Heart left ventricle (tissue), 16 donors: ENCODE measurements at regions of chr5 and their contacts with region 1.

Region 1: GRCh38 chr5:88502179-88503040 is 233.8 kb upstream of the TMEM161B start:
- DNase-seq: no peak
- ATAC-seq: no peak
- H3K4me3 ChIP-seq: peak overlapping the region; percentile 9 to 68 (median 52)
- H3K27ac ChIP-seq: peak overlapping the region in 5 of 12 donors; percentile 6 to 72 (median 58)
- H3K4me1 ChIP-seq: peaks cover 0 to 4% (median 0%) of the 10 kb centered on the region in 12 donors
- H3K27me3 ChIP-seq: no peaks in the 10 kb centered on the region
- CTCF ChIP-seq: no peak
- POLR2A ChIP-seq: no peak

Region 2: GRCh38 chr5:88583471-88583870 is 81.1 kb after region 1 on chr5:
- intact Hi-C with region 1: no loop called
- DNase-seq: no peak
- ATAC-seq: no peak
- H3K4me3 ChIP-seq: no peak overlapping the region
- H3K27ac ChIP-seq: no peak overlapping the region
- H3K4me1 ChIP-seq: no peaks in the 10 kb centered on the region
- H3K27me3 ChIP-seq: no peaks in the 10 kb centered on the region
- CTCF ChIP-seq: no peak
- POLR2A ChIP-seq: no peak

Region 3: GRCh38 chr5:88644676-88645075 is 142.3 kb after region 1 on chr5:
- intact Hi-C with region 1: loop called in 1 of 10 experiments (anchors 10 kb)
- DNase-seq: no peak
- ATAC-seq: no peak
- H3K4me3 ChIP-seq: no peak overlapping the region
- H3K27ac ChIP-seq: no peak overlapping the region
- H3K4me1 ChIP-seq: no peaks in the 10 kb centered on the region
- H3K27me3 ChIP-seq: peaks cover 0 to 34% (median 2%) of the 10 kb centered on the region in 9 donors
- CTCF ChIP-seq: no peak
- POLR2A ChIP-seq: no peak